Left ventricle myocardium inferior (tissue), 1 donor: ENCODE measurements at regions of chr2 and their contacts with region 1.

Region 1: DNA sequence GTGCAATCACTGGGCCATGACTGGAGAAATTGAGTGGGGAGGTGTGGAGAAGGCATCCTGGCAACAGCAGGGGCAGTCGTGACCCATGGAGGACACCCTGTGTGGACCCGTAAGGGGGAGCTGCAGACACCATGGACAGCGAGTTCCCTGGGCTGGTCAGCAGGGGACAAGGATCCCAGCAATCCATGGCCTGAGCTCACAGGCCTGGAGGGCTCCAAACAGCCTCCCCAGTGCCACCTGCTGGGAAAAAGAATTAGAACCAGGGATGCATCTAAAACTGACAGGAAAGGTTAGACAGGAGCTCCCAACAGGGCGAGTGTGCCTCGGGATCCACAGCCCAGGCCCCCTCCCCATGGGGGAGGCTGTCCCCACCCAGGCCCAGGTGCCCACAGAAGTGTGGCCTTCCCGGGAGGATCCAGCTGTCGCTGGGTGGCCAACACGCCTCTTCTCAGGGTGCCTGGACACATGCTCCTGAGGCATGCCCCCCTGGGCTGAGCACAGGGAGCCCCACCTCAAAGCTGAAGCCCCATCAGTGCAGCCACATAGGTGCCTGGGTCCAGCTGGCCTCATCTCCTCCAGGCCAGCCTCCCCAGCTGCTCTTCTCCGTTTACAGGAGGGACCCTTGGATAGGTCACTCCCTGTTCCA is 20.5 kb upstream of the KIF1A start:
- DNase-seq: no peak
- H3K4me3 ChIP-seq: no peak overlapping the region
- H3K27ac ChIP-seq: no peak overlapping the region
- H3K4me1 ChIP-seq: no peaks in the 10 kb centered on the region
- H3K27me3 ChIP-seq: peaks cover 68% of the 10 kb centered on the region
- CTCF ChIP-seq: peak; percentile 70

Region 2: GRCh38 chr2:239015218-239015900 is 1825.2 kb before region 1 on chr2:
- intact Hi-C with region 1: loop called (anchors 10 kb)
- DNase-seq: no peak
- H3K4me3 ChIP-seq: no peak overlapping the region
- H3K27ac ChIP-seq: no peak overlapping the region
- H3K4me1 ChIP-seq: no peaks in the 10 kb centered on the region
- H3K27me3 ChIP-seq: peaks cover 92% of the 10 kb centered on the region
- CTCF ChIP-seq: no peak

Region 3: GRCh38 chr2:239257511-239257937 is 1583.0 kb before region 1 on chr2:
- intact Hi-C with region 1: no loop called
- DNase-seq: no peak
- H3K4me3 ChIP-seq: no peak overlapping the region
- H3K27ac ChIP-seq: peak overlapping the region; percentile 42
- H3K4me1 ChIP-seq: peaks cover 76% of the 10 kb centered on the region
- H3K27me3 ChIP-seq: no peaks in the 10 kb centered on the region
- CTCF ChIP-seq: no peak